ENCODE measurements at regions of chr1 and their contacts with region 1.

Region 1: GRCh38 chr1:46247436-46248121 is at the start of gene RAD54L:
- DNase-seq: peak; percentile 97
- ATAC-seq: peak; percentile 95
- H3K4me3 ChIP-seq: peak within 1 kb of the TSS; percentile 70 to 77 (median 76)
- H3K4me3 Mint-ChIP-seq: peak within 1 kb of the TSS; percentile 98
- H3K27ac ChIP-seq: peak within 1 kb of the TSS; percentile 39 to 63
- H3K27ac Mint-ChIP-seq: peak within 1 kb of the TSS; percentile 89
- H3K4me1 ChIP-seq: peaks cover 12 to 17% of the 10 kb centered on the region in 2 donors
- H3K4me1 Mint-ChIP-seq: peaks cover 16% of the 10 kb centered on the region
- H3K27me3 ChIP-seq: no peaks in the 10 kb centered on the region
- H3K27me3 Mint-ChIP-seq: no peaks in the 10 kb centered on the region
- CTCF ChIP-seq: no peak
- total RNA-seq, gene RAD54L: 1.1 and 1.9 TPM in 2 replicates

Region 2: GRCh38 chr1:46043458-46044017 is 204.0 kb before region 1 on chr1:
- CTCF ChIA-PET with region 1: no interaction called
- POLR2A ChIA-PET with region 1: no interaction called
- intact Hi-C with region 1: loop called (anchors 1 kb)
- DNase-seq: peak; percentile 90
- ATAC-seq: peak; percentile 100
- H3K4me3 ChIP-seq: peak overlapping the region in 2 of 5 experiments; percentile 6 to 37
- H3K4me3 Mint-ChIP-seq: peak overlapping the region; percentile 65
- H3K27ac ChIP-seq: peak overlapping the region; percentile 36 to 38
- H3K27ac Mint-ChIP-seq: peak overlapping the region; percentile 71
- H3K4me1 ChIP-seq: peaks cover 36 to 37% of the 10 kb centered on the region in 2 donors
- H3K4me1 Mint-ChIP-seq: peaks cover 36% of the 10 kb centered on the region
- H3K27me3 ChIP-seq: no peaks in the 10 kb centered on the region
- H3K27me3 Mint-ChIP-seq: no peaks in the 10 kb centered on the region
- CTCF ChIP-seq: no peak

Region 3: GRCh38 chr1:46132529-46133180 is 114.9 kb before region 1 on chr1 and contains the start of gene PIK3R3:
- CTCF ChIA-PET with region 1: no interaction called
- POLR2A ChIA-PET with region 1: no interaction called
- intact Hi-C with region 1: loop called (anchors 2 kb)
- DNase-seq: peak; percentile 88
- ATAC-seq: peak; percentile 88
- H3K4me3 ChIP-seq: peak within 1 kb of the TSS; percentile 73 to 92 (median 77)
- H3K4me3 Mint-ChIP-seq: peak within 1 kb of the TSS; percentile 94
- H3K27ac ChIP-seq: peak within 1 kb of the TSS; percentile 30 to 40
- H3K27ac Mint-ChIP-seq: peak within 1 kb of the TSS; percentile 76
- H3K4me1 ChIP-seq: peaks cover 17 to 20% of the 10 kb centered on the region in 2 donors
- H3K4me1 Mint-ChIP-seq: peaks cover 23% of the 10 kb centered on the region
- H3K27me3 ChIP-seq: peaks cover 0 to 41% (median 24%) of the 10 kb centered on the region in 4 experiments
- H3K27me3 Mint-ChIP-seq: peaks cover 48% of the 10 kb centered on the region
- CTCF ChIP-seq: no peak
- total RNA-seq, gene PIK3R3: 0.17 and 0.78 TPM in 2 replicates

Region 4: GRCh38 chr1:46197964-46198811 is 49.4 kb before region 1 on chr1 and contains the start of gene POMGNT1:
- CTCF ChIA-PET with region 1: no interaction called
- POLR2A ChIA-PET with region 1: no interaction called
- intact Hi-C with region 1: loop called (anchors 1 kb)
- DNase-seq: peak; percentile 81
- ATAC-seq: peak; percentile 98
- H3K4me3 ChIP-seq: peak within 1 kb of the TSS; percentile 74 to 80 (median 77)
- H3K4me3 Mint-ChIP-seq: peak within 1 kb of the TSS; percentile 88
- H3K27ac ChIP-seq: peak within 1 kb of the TSS; percentile 34 to 66
- H3K27ac Mint-ChIP-seq: peak within 1 kb of the TSS; percentile 70
- H3K4me1 ChIP-seq: peaks cover 19 to 28% of the 10 kb centered on the region in 2 donors
- H3K4me1 Mint-ChIP-seq: peaks cover 26% of the 10 kb centered on the region
- H3K27me3 ChIP-seq: peaks cover 0 to 9% (median 4%) of the 10 kb centered on the region in 4 experiments
- H3K27me3 Mint-ChIP-seq: peaks cover 6% of the 10 kb centered on the region
- CTCF ChIP-seq: no peak
- total RNA-seq, gene POMGNT1: 50.8 and 51.0 TPM in 2 replicates

Region 5: GRCh38 chr1:46340404-46341221 is 93.0 kb after region 1 on chr1 and contains the start of gene NSUN4:
- CTCF ChIA-PET with region 1: interaction called, 77 read pairs
- POLR2A ChIA-PET with region 1: interaction called, 5 read pairs
- intact Hi-C with region 1: loop called (anchors 2 kb)
- DNase-seq: peak; percentile 94
- ATAC-seq: peak; percentile 79
- H3K4me3 ChIP-seq: peak within 1 kb of the TSS; percentile 69 to 99 (median 97)
- H3K4me3 Mint-ChIP-seq: peak within 1 kb of the TSS; percentile 100
- H3K27ac ChIP-seq: peak within 1 kb of the TSS; percentile 99 to 100
- H3K27ac Mint-ChIP-seq: peak within 1 kb of the TSS; percentile 99
- H3K4me1 ChIP-seq: peaks cover 10 to 21% of the 10 kb centered on the region in 2 donors
- H3K4me1 Mint-ChIP-seq: peaks cover 30% of the 10 kb centered on the region
- H3K27me3 ChIP-seq: no peaks in the 10 kb centered on the region
- H3K27me3 Mint-ChIP-seq: no peaks in the 10 kb centered on the region
- CTCF ChIP-seq: peak; percentile 64
- total RNA-seq, gene NSUN4: 30.1 and 33.7 TPM in 2 replicates

Region 6: DNA sequence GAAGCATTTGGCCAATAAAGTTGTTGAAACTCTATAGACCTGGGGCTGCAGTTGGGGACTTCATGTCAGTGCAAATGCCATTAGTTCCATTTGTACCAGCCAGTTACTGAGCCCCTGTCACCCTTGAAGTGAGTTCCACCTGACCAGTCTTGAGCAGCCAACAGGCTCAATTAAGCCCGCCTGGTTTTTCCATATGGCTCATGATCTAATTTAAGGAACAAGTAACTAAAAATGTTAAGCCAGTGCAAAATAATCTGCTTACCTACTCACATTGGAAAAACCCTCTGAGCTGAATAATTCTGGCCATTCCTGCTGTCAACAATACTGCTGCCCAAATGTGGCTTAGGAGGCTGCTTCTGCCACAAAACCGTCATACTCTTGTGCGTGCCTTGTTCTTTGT is 114.6 kb after region 1 on chr1:
- CTCF ChIA-PET with region 1: interaction called, 10 read pairs
- POLR2A ChIA-PET with region 1: no interaction called
- intact Hi-C with region 1: no loop called
- DNase-seq: no peak
- ATAC-seq: no peak
- H3K4me3 ChIP-seq: no peak overlapping the region
- H3K4me3 Mint-ChIP-seq: no peak overlapping the region
- H3K27ac ChIP-seq: no peak overlapping the region
- H3K27ac Mint-ChIP-seq: no peak overlapping the region
- H3K4me1 ChIP-seq: no peaks in the 10 kb centered on the region
- H3K4me1 Mint-ChIP-seq: no peaks in the 10 kb centered on the region
- H3K27me3 ChIP-seq: no peaks in the 10 kb centered on the region
- H3K27me3 Mint-ChIP-seq: no peaks in the 10 kb centered on the region
- CTCF ChIP-seq: no peak

Region 7: DNA sequence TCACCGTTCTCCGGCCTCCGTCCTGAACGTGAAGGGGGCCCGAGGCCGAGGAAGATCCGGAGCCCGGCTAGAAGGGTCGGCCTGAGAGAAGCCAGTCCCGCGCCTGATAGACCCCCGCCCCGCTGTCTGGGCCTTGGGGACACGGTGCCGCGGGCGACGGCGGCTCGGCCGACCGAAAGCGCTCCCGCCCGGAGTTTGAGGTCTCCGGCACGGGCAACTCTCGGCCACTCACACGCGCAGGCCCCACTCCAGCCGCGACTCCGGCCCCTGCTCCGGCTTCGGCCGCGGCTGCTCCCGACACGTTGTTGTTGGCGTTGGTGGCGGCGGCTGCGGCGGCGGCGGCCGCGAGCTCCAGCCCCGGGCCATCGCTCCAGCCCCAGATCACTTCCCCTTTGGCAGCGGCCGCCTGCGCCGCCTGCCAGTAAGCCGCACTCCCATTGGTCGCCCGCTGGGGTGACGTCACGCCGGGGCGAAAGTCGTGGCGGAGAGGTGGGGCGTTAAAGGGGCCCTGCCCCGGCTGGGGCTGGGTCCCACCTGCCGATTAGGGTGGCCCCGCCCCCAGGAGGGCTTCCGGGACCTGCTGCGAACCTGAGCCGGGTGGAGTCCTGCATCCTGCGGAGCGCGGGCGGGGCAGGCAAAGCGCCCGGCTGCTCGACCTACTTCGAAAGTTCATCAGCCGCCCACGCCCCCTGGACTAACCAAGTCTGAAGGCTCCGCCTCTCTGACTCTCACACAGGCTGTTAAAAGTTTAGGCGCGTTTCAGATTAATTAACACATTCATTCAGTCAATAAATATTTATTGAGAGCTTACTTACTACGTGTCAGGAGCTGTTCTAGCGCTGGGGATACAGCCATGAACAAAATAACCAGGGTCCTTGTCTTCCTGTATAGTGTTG is 471.4 kb after region 1 on chr1 and contains the start of gene EFCAB14:
- CTCF ChIA-PET with region 1: no interaction called
- POLR2A ChIA-PET with region 1: no interaction called
- intact Hi-C with region 1: loop called (anchors 5 kb)
- DNase-seq: peak; percentile 99
- ATAC-seq: peak; percentile 99
- H3K4me3 ChIP-seq: peak within 1 kb of the TSS; percentile 84 to 95 (median 87)
- H3K4me3 Mint-ChIP-seq: peak within 1 kb of the TSS; percentile 89
- H3K27ac ChIP-seq: peak within 1 kb of the TSS; percentile 48 to 89
- H3K27ac Mint-ChIP-seq: peak within 1 kb of the TSS; percentile 95
- H3K4me1 ChIP-seq: peaks cover 24 to 25% of the 10 kb centered on the region in 2 donors
- H3K4me1 Mint-ChIP-seq: peaks cover 40% of the 10 kb centered on the region
- H3K27me3 ChIP-seq: no peaks in the 10 kb centered on the region
- H3K27me3 Mint-ChIP-seq: no peaks in the 10 kb centered on the region
- CTCF ChIP-seq: no peak
- total RNA-seq, gene EFCAB14: 90.0 and 98.8 TPM in 2 replicates

Measured in B cell (primary cell).